Endothelial cell of umbilical vein (primary cell): ENCODE measurements at regions of chr12 and their contacts with region 1.

Region 1: GRCh38 chr12:103965590-103966504 is at the start of gene TDG:
- DNase-seq: peak; percentile 99
- H3K4me3 ChIP-seq: peak within 1 kb of the TSS; percentile 88 to 98 (median 93)
- H3K27ac ChIP-seq: peak within 1 kb of the TSS; percentile 74
- H3K4me1 ChIP-seq: peaks cover 10% of the 10 kb centered on the region
- H3K27me3 ChIP-seq: no peaks in the 10 kb centered on the region
- CTCF ChIP-seq: peak in 1 of 2 donors; percentile 14
- POLR2A ChIP-seq: peak; percentile 99
- total RNA-seq, gene TDG: 35.1 and 36.8 TPM in 2 replicates

Region 2: DNA sequence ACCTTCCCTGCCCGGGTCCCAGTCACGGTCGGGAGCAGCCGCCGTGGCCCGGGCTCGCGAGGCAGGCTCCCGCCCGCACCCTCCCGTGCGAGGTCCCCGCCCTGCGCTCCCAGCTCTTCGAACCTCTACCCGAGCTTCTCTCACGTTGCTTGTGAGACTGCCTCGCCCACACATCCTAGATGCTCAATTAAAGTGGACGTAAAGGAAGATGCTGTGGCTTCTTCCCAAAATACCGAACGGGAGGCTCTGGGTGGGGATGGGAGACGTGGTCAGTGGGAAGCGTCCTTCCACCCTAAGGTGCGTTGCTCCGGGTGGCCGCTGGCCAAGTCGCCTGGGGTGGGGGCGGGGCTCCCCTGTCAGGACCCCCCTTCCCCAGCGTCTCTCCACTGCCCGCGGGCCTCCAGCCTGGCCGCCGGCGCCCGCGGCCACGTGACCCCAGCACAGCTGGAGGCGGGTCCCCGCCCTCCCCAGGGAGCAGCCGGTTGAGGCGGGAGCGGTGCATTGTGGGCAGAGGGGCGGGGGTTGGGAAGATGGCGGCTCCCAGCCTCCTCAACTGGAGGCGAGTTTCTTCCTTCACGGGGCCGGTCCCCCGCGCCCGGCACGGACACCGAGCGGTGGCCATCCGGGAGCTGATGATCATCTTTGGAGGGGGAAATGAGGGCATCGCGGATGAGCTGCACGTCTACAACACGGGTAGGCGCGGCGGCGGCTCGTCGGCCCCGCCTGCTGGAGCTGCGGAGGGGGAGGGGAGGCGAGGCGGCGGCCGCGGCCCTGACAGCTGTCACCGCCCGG is 98.4 kb after region 1 on chr12 and contains the start of gene HCFC2:
- CTCF ChIA-PET with region 1: interaction called, 3 read pairs
- POLR2A ChIA-PET with region 1: interaction called, 3 read pairs
- dilution Hi-C with region 1: no loop called
- intact Hi-C with region 1: loop called (anchors 2 kb)
- DNase-seq: peak; percentile 89
- H3K4me3 ChIP-seq: peak within 1 kb of the TSS; percentile 86 to 89 (median 86)
- H3K27ac ChIP-seq: peak within 1 kb of the TSS; percentile 41
- H3K4me1 ChIP-seq: peaks cover 10% of the 10 kb centered on the region
- H3K27me3 ChIP-seq: no peaks in the 10 kb centered on the region
- CTCF ChIP-seq: no peak
- POLR2A ChIP-seq: peak; percentile 75
- total RNA-seq, gene HCFC2: 13.4 and 15.6 TPM in 2 replicates

Region 3: GRCh38 chr12:104219908-104220530 is 254.2 kb after region 1 on chr12:
- CTCF ChIA-PET with region 1: no interaction called
- POLR2A ChIA-PET with region 1: no interaction called
- dilution Hi-C with region 1: no loop called
- intact Hi-C with region 1: no loop called
- DNase-seq: peak; percentile 87
- H3K4me3 ChIP-seq: peak overlapping the region in 1 of 3 experiments; percentile 2
- H3K27ac ChIP-seq: peak overlapping the region; percentile 95
- H3K4me1 ChIP-seq: peaks cover 40% of the 10 kb centered on the region
- H3K27me3 ChIP-seq: no peaks in the 10 kb centered on the region
- CTCF ChIP-seq: no peak
- POLR2A ChIP-seq: no peak